ENCODE measurements at regions of chr3 and their contacts with region 1.

Region 1: DNA sequence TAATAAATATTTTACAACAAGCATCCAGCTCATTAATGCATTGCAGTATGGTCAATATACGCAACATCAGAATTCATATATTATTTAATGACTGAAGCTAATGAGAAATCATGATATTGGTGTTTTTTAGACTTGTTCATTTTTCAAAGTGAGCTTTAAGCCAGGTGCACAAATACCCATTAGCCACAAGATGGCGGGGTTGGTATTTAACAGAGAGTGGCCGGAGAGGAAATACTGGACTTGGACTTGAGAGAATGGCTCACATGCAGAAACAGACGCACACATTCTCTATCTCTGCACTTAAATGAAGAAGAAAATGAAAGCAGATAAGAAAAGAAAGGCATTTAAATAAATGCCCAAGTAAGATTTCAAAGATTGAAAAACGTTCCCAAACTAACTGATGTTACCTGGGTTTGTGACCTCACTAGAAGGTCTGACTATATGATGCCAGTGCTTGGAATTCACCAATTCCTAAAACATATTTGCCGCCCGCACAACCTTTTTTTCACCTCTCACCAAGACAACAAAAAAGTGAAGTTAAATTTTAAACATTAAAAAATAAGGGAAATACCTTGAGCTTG is 21.2 kb upstream of the CRBN start:
- DNase-seq: peak; percentile 24
- CTCF ChIP-seq: peak; percentile 73

Region 2: GRCh38 chr3:3998140-3998922 is 797.6 kb after region 1 on chr3:
- in situ Hi-C with region 1: loop called (anchors 25 kb)
- DNase-seq: peak; percentile 46
- CTCF ChIP-seq: peak; percentile 62

Region 3: DNA sequence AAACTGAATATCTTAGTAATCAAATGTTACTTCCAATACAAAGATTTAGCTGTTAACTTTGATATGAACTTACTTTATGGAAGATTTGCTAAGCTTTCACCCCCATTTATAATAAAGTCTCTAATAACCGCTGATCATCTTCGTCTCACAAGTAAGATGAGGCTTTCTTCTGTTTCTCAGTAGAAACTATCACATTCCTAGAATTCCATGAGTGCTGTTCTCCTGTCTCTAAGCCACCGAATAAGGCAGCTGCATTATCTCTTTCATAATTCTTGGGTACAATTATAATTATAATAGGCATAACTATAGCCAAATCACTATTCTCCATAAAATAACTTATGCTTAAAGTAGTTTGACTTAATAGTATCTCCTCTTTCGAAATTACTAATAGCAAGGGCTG is 1084.1 kb after region 1 on chr3:
- in situ Hi-C with region 1: loop called (anchors 10 kb)
- DNase-seq: no peak
- CTCF ChIP-seq: no peak

Measured in GM13976 (cell line).